A673 (cell line): ENCODE measurements at regions of chrX and their contacts with region 1.

Region 1: DNA sequence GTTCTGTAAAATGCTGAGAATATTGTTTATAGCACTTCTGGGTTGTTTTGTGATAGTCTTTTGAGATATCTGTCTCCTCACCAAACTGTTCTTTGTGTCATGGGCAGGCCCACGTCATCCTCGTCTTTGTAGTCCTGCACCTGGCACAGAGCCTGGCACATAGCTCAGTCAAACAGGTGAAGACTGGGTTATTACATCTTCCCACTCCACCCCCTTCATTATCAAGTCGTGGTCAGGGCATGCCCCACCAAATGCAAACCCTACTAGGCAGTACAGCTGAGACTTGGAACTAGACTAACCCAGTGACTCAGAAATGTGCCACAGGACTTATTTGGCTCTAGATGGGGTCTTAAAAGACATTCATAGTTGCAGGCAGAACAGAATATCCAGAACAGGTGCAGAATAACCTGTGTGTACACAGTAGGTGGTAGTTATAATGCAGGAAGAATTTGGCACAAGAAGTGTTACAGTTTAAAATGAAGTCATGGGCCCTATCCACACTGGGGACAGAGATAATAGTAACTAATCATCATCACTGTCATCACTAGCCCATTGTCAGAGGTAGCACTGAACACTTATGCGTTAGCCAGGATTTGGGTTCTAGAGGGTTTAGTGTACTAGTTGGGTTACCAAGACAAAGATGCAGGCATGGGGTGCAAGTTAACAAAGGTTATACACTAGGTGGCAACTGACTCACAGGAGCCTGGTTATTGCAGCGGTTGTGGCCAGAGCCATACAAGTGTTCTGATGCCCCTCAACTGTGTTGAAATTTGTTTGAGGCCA is 74.9 kb downstream of the TBL1X start:
- DNase-seq: no peak
- H3K4me3 ChIP-seq: no peak overlapping the region
- H3K27ac ChIP-seq: no peak overlapping the region
- H3K4me1 ChIP-seq: peaks cover 6% of the 10 kb centered on the region
- H3K27me3 ChIP-seq: no peaks in the 10 kb centered on the region
- CTCF ChIP-seq: no peak

Region 2: GRCh38 chrX:9555354-9555753 is 15.6 kb after region 1 on chrX:
- CTCF ChIA-PET with region 1: interaction called, 12 read pairs
- POLR2A ChIA-PET with region 1: no interaction called
- intact Hi-C with region 1: no loop called
- DNase-seq: no peak
- H3K4me3 ChIP-seq: no peak overlapping the region
- H3K27ac ChIP-seq: no peak overlapping the region
- H3K4me1 ChIP-seq: no peaks in the 10 kb centered on the region
- H3K27me3 ChIP-seq: no peaks in the 10 kb centered on the region
- CTCF ChIP-seq: no peak